ENCODE measurements at regions of chr17 and their contacts with region 1.

Region 1: DNA sequence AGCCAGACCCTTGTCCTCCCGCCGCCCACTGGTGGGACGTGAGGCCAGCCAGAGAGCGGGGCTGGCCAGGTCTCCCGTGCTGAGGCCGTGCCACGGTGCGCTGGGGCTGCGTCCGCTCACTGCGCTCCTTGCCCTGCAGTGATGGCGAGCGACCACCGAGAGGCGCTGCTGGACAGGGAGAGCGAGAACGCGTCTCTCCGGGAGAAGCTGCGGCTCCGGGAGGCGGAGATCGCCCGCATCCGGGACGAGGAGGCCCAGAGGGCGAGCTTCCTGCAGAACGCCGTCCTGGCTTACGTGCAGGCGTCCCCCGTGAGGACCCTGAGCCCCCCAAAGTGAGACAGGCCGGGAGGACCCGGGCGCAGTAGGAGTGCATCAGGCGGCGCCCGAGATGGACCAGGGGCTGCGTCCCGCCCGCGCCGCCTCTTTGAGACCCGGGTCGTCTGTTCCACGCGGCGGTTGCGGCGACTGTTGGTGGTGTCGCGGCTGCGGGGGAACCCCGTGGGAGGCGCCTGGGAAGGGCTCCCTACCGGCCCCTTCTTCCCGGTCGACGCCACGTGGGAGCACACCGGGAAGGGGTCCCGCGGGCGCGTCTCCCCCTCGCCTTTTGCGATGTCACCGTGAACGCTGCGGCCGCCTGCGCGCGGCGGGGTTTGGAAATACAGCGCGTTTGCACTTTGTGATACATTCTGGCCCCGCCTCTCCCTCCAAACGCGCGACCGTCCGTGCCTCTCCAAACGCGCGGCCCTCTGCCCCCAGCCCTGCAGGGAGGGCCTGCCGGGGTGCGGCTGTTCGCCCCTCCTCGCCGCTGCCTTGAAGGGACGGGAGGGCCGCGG is 792 bp upstream of the RAC3 start:
- DNase-seq: peak; percentile 73 to 92 (median 86)
- ATAC-seq: peak; percentile 94
- H3K4me3 ChIP-seq: peak overlapping the region; percentile 60
- H3K4me3 Mint-ChIP-seq: peak overlapping the region; percentile 77 to 91 (median 86)
- H3K27ac ChIP-seq: peak overlapping the region; percentile 48
- H3K27ac Mint-ChIP-seq: peak overlapping the region in 6 of 9 donors; percentile 36 to 85 (median 65)
- H3K4me1 ChIP-seq: peaks cover 7 to 12% of the 10 kb centered on the region in 2 donors
- H3K4me1 Mint-ChIP-seq: peaks cover 10 to 16% (median 16%) of the 10 kb centered on the region in 7 donors
- H3K27me3 ChIP-seq: no peaks in the 10 kb centered on the region
- H3K27me3 Mint-ChIP-seq: no peaks in the 10 kb centered on the region

Region 2: DNA sequence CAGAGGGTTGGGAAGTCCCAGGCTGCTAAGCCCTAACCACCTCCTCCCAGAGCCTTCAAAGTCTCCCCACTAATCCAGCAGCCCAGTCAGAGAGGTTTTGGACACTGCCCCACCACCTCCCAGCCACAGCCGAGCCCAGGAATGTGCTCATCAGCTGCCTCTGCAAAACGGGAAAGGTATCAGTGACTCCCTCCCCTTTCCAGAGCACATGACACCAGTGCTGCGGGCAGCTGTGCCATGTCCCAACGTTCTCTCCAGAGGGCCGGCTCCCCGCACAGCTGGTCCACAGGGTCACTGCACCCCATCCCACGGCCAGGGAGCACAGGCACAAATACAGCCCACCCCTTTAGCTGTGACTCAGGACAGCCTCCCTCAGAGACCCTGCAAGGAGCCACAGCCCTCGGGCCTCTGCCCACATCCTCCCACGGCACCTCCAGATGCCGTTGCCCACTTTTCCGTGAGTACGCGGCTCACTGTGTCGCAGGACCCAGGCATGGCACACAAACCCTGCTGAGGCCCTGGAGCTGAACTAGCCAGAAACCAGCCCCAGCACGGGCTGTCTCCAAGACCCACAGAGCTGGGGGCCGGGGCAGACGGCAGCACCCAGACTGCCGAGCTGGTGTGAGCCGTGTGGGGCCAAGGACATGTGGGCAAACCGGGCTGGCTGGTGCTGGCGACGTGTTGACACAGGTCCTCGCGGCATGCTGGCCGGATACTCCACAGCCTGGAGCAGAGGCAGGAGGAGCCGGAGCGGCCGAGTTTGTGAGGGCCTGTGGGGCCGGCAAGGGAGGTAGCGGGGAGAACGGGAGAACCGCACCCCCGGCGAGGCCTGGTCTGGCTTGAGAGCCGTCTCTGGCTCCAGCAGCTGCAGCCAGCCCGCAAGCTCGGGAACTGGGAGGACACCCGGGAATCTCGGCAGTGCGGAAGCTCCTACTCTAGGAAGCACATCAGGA is 189.6 kb before region 1 on chr17:
- CTCF ChIA-PET with region 1: no interaction called
- POLR2A ChIA-PET with region 1: no interaction called
- intact Hi-C with region 1: no loop called
- DNase-seq: no peak
- ATAC-seq: peak; percentile 10
- H3K4me3 ChIP-seq: no peak overlapping the region
- H3K4me3 Mint-ChIP-seq: no peak overlapping the region
- H3K27ac ChIP-seq: no peak overlapping the region
- H3K27ac Mint-ChIP-seq: no peak overlapping the region
- H3K4me1 ChIP-seq: no peaks in the 10 kb centered on the region
- H3K4me1 Mint-ChIP-seq: peaks cover 0 to 5% (median 0%) of the 10 kb centered on the region in 7 donors
- H3K27me3 ChIP-seq: no peaks in the 10 kb centered on the region
- H3K27me3 Mint-ChIP-seq: no peaks in the 10 kb centered on the region

Region 3: DNA sequence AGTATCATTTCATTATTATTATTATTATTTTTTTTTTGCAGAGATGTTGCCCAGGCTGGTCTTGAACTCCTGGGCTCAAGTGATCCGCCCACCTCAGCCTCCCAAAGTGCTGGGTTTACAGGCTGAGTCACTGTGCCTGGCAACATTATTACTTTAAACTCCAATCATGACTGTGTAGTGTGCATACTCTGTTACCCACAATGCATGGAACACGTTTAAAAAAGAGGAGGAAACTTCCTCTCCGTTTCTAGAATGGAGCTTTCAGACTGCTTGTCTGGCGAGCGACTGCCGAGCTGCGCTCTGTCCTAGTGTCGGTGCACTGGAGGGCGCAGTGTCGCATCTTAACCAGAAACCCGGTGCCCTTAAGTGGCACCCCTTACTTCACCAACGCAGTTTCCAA is 89.5 kb after region 1 on chr17:
- CTCF ChIA-PET with region 1: interaction called, 12 read pairs
- POLR2A ChIA-PET with region 1: interaction called, 5 read pairs
- intact Hi-C with region 1: no loop called
- DNase-seq: peak in 7 of 9 donors; percentile 55 to 85 (median 76)
- ATAC-seq: peak; percentile 91
- H3K4me3 ChIP-seq: no peak overlapping the region
- H3K4me3 Mint-ChIP-seq: peak overlapping the region; percentile 8 to 79 (median 67)
- H3K27ac ChIP-seq: peak overlapping the region; percentile 66
- H3K27ac Mint-ChIP-seq: peak overlapping the region; percentile 60 to 100 (median 95)
- H3K4me1 ChIP-seq: peaks cover 1 to 57% of the 10 kb centered on the region in 2 donors
- H3K4me1 Mint-ChIP-seq: peaks cover 25 to 69% (median 64%) of the 10 kb centered on the region in 7 donors
- H3K27me3 ChIP-seq: no peaks in the 10 kb centered on the region
- H3K27me3 Mint-ChIP-seq: no peaks in the 10 kb centered on the region

Region 4: GRCh38 chr17:82153745-82154375 is 123.2 kb after region 1 on chr17:
- CTCF ChIA-PET with region 1: interaction called, 27 read pairs
- POLR2A ChIA-PET with region 1: interaction called, 29 read pairs
- intact Hi-C with region 1: loop called in 1 of 2 experiments (anchors 1 kb)
- DNase-seq: peak; percentile 76 to 91 (median 82)
- ATAC-seq: peak; percentile 99
- H3K4me3 ChIP-seq: no peak overlapping the region
- H3K4me3 Mint-ChIP-seq: no peak overlapping the region
- H3K27ac ChIP-seq: no peak overlapping the region
- H3K27ac Mint-ChIP-seq: peak overlapping the region in 7 of 9 donors; percentile 23 to 97 (median 87)
- H3K4me1 ChIP-seq: peaks cover 0 to 10% of the 10 kb centered on the region in 2 donors
- H3K4me1 Mint-ChIP-seq: peaks cover 5 to 20% (median 10%) of the 10 kb centered on the region in 7 donors
- H3K27me3 ChIP-seq: no peaks in the 10 kb centered on the region
- H3K27me3 Mint-ChIP-seq: no peaks in the 10 kb centered on the region

Region 5: GRCh38 chr17:82230627-82231311 is 200.1 kb after region 1 on chr17:
- CTCF ChIA-PET with region 1: no interaction called
- POLR2A ChIA-PET with region 1: no interaction called
- intact Hi-C with region 1: loop called (anchors 2 to 10 kb)
- DNase-seq: peak in 2 of 9 donors; percentile 47 to 82
- ATAC-seq: peak; percentile 58
- H3K4me3 ChIP-seq: peak overlapping the region; percentile 35
- H3K4me3 Mint-ChIP-seq: peak overlapping the region in 7 of 10 donors; percentile 74 to 96 (median 79)
- H3K27ac ChIP-seq: peak overlapping the region; percentile 57
- H3K27ac Mint-ChIP-seq: no peak overlapping the region
- H3K4me1 ChIP-seq: peaks cover 26 to 32% of the 10 kb centered on the region in 2 donors
- H3K4me1 Mint-ChIP-seq: peaks cover 6 to 23% (median 10%) of the 10 kb centered on the region in 7 donors
- H3K27me3 ChIP-seq: no peaks in the 10 kb centered on the region
- H3K27me3 Mint-ChIP-seq: no peaks in the 10 kb centered on the region

Region 6: DNA sequence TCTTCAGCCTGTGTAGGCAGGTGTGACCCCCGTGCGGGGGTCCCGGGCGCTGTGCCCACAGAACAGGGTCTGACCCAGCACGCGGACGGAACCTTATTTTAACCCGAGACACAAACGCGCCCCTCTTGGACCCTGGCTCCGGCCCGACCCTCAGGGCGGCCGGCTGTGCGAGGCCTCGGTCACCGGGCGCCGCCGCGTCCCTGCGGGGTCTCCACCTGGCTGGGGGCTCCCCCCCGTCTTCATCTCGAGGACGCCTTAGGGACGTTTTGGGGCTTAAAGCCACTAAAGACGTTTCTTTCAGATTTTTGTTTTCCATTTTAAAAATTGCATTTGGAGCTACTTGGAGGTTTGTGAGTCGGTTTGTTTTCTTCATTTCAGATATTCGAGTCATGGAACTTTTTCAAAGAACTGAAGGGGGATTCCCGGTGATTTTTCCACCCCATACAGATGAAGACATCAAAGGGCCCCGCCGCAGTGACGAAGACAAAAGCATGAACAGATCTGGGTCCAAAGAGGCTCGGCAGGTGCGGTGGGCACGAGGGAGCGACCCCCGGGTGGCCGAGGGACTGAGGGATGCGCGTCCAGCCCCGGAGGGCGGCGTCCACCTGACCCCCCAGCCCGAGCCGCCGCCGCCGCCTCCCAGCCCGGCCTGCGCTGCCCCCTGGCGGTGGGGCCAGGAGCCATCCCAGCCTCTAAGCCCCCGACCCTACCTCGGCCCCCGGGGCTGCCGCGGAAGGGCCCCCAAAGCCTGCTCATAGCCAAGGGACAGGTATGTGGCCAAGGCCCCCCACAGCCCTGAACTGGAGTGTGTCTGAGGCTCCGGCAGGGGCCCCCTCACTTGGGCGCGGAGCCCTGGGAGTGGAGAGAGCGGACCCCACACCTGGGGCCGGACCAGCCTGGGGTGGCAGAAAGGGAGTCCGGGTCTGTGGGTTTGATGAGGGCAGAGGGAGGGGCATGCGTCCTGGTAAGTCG is 290.6 kb after region 1 on chr17:
- CTCF ChIA-PET with region 1: interaction called, 3 read pairs
- POLR2A ChIA-PET with region 1: interaction called, 4 read pairs
- intact Hi-C with region 1: loop called in 1 of 2 experiments (anchors 1 kb)
- DNase-seq: peak; percentile 70 to 95 (median 80)
- ATAC-seq: peak; percentile 69
- H3K4me3 ChIP-seq: peak overlapping the region; percentile 46
- H3K4me3 Mint-ChIP-seq: peak overlapping the region; percentile 58 to 87 (median 82)
- H3K27ac ChIP-seq: peak overlapping the region; percentile 77
- H3K27ac Mint-ChIP-seq: peak overlapping the region; percentile 75 to 97 (median 93)
- H3K4me1 ChIP-seq: peaks cover 13 to 20% of the 10 kb centered on the region in 2 donors
- H3K4me1 Mint-ChIP-seq: peaks cover 0 to 31% (median 16%) of the 10 kb centered on the region in 7 donors
- H3K27me3 ChIP-seq: no peaks in the 10 kb centered on the region
- H3K27me3 Mint-ChIP-seq: no peaks in the 10 kb centered on the region

Region 7: GRCh38 chr17:82551779-82552457 is 521.2 kb after region 1 on chr17:
- CTCF ChIA-PET with region 1: no interaction called
- POLR2A ChIA-PET with region 1: no interaction called
- intact Hi-C with region 1: loop called in 1 of 2 experiments (anchors 1 kb)
- DNase-seq: peak; percentile 61 to 83 (median 77)
- ATAC-seq: peak; percentile 99
- H3K4me3 ChIP-seq: no peak overlapping the region
- H3K4me3 Mint-ChIP-seq: peak overlapping the region in 3 of 10 donors; percentile 13 to 64 (median 27)
- H3K27ac ChIP-seq: no peak overlapping the region
- H3K27ac Mint-ChIP-seq: peak overlapping the region in 8 of 9 donors; percentile 32 to 86 (median 81)
- H3K4me1 ChIP-seq: peaks cover 3 to 18% of the 10 kb centered on the region in 2 donors
- H3K4me1 Mint-ChIP-seq: peaks cover 28 to 52% (median 37%) of the 10 kb centered on the region in 7 donors
- H3K27me3 ChIP-seq: no peaks in the 10 kb centered on the region
- H3K27me3 Mint-ChIP-seq: no peaks in the 10 kb centered on the region

Measured in naive thymus-derived CD4-positive, alpha-beta T cell (primary cell).